Activated CD8-positive, alpha-beta memory T cell treated with anti-CD3 and anti-CD28 coated beads, Interleukin-2, amount 10 ng/mL, durations not matched to agents 7 days and 5 days (primary cell): ENCODE measurements at regions of chr19 and their contacts with region 1.

Region 1: GRCh38 chr19:1064661-1065605 is 2.0 kb upstream of the ARHGAP45 start:
- DNase-seq: peak; percentile 78
- ATAC-seq: peak; percentile 40
- H3K4me3 Mint-ChIP-seq: no peak overlapping the region
- H3K27ac Mint-ChIP-seq: peak overlapping the region; percentile 57
- H3K4me1 Mint-ChIP-seq: peaks cover 26% of the 10 kb centered on the region
- H3K27me3 Mint-ChIP-seq: no peaks in the 10 kb centered on the region

Region 2: DNA sequence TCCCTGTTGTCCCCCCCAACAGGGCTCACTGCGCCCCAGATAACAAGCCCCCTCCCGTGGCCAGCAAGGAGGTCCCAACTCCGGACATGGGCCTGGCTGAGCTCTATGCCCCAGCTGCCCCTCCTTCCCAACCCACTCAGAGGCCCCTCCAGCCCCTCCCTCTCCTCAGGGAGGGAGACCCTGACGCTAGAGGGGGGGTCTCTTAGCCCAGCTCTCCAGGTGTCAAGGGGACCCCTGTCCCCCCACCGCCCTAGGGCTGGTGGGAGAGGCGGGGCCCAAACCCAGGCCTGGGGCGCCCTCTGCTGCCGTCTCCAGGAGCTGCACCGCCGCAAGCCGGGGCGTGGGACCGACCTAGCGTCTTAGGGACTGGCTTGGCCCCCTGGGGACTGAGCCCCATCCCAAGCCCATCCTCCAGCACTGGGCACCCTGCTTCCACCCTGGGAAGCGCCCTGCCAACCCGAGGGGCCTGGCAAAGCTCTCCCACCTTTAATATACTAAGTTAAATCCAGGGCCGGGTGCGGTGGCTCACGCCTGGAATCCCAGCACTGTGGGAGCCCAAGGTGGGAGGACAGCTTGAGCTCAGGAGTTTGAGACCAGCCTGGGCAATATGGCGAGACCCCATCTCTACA is 63.3 kb before region 1 on chr19:
- CTCF ChIA-PET with region 1: no interaction called
- DNase-seq: peak; percentile 74
- ATAC-seq: peak; percentile 77
- H3K4me3 Mint-ChIP-seq: no peak overlapping the region
- H3K27ac Mint-ChIP-seq: no peak overlapping the region
- H3K4me1 Mint-ChIP-seq: peaks cover 3% of the 10 kb centered on the region
- H3K27me3 Mint-ChIP-seq: peaks cover 34% of the 10 kb centered on the region

Region 3: DNA sequence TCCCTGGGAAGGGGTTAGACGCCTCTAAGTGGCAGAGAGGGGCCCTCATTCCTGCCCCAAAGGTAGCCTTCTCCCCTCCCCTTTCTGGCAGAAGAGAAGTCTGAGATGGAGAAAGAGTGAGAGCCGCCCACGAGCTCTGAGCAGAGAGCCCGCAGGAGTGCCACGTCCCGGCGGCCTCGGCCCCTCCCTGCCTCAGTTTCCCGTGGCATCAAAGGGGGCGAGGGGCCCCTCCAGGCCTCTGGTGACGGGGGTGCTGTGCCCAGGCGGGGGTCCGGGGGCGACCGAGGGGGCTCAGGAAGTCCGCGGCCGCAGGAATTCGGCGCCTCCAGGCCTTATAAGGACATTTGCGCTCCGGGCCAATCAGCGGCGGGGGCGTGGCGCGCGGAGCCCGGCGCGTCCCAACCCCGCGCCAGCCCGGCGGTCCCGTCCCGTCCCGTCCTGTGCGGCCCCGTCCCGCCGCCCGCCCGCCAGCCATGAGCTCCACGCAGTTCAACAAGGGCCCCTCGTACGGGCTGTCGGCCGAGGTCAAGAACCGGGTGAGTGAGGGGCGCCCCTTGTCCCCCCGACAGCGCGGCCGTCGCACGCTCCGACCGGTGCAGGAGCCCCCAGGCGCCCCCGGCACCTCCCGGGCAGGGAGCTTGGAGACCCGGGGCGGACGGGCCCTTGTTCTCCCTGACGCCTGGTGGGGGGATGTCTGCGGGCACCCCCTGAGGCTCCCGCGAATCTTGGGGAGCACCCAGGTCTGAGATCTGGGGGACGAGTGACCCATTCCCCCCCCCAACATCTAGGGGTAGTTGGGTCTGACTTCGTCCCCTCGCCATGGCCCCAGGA is 38.5 kb before region 1 on chr19 and contains the start of gene CNN2:
- CTCF ChIA-PET with region 1: interaction called, 43 read pairs
- DNase-seq: peak; percentile 79
- ATAC-seq: peak; percentile 69
- H3K4me3 Mint-ChIP-seq: peak within 1 kb of the TSS; percentile 91
- H3K27ac Mint-ChIP-seq: peak within 1 kb of the TSS; percentile 90
- H3K4me1 Mint-ChIP-seq: peaks cover 29% of the 10 kb centered on the region
- H3K27me3 Mint-ChIP-seq: no peaks in the 10 kb centered on the region
- total RNA-seq, gene CNN2: 295 to 296 TPM

Region 4: GRCh38 chr19:1039646-1040475 is 25.1 kb before region 1 on chr19 and contains the start of gene ABCA7:
- CTCF ChIA-PET with region 1: interaction called, 56 read pairs
- DNase-seq: peak; percentile 100
- ATAC-seq: peak; percentile 95
- H3K4me3 Mint-ChIP-seq: peak within 1 kb of the TSS; percentile 93
- H3K27ac Mint-ChIP-seq: peak within 1 kb of the TSS; percentile 83
- H3K4me1 Mint-ChIP-seq: peaks cover 53% of the 10 kb centered on the region
- H3K27me3 Mint-ChIP-seq: no peaks in the 10 kb centered on the region
- total RNA-seq, gene ABCA7: 62.7 to 72.9 TPM

Region 5: GRCh38 chr19:1087813-1088415 is 23.0 kb after region 1 on chr19:
- CTCF ChIA-PET with region 1: interaction called, 108 read pairs
- DNase-seq: no peak
- ATAC-seq: peak; percentile 23
- H3K4me3 Mint-ChIP-seq: peak overlapping the region; percentile 21
- H3K27ac Mint-ChIP-seq: peak overlapping the region; percentile 84
- H3K4me1 Mint-ChIP-seq: peaks cover 47% of the 10 kb centered on the region
- H3K27me3 Mint-ChIP-seq: no peaks in the 10 kb centered on the region

Region 6: DNA sequence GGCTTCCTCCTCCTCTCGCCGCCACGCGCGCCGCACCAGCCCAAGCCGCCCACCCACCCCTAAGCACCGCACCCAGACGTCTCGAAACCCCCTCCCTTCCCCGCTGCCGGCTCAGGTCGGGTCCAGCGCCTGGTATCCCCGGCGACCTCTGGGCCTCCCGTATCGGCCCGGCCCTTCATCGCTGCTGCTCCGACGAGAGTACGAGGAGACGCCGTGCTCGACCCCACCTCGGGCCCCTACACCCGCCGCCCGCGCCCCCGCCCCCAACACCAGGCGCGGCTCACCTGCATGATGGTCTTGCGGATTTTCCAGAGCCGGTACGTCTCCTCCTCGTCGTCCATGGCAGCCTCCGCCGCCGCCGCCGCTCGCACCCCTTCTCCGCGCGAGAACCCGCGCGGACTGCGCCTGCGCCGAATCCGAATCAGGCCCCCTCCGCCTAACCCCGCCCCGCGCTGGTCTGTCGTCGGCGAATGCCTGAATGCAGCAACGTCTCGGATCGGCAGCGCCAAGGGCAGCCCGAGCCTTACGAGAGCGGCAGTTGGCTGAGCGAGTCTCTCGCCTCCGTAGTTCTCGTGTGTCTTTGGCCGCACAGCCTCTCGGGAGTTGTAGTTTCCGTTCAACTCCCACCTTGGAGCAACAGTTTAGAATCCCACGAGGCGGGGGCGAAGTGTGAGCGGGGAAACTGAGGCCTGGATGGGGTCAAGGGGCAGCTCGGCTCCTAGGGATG is 30.2 kb after region 1 on chr19 and contains the start of gene POLR2E:
- CTCF ChIA-PET with region 1: interaction called, 64 read pairs
- DNase-seq: peak; percentile 99
- ATAC-seq: peak; percentile 96
- H3K4me3 Mint-ChIP-seq: peak within 1 kb of the TSS; percentile 86
- H3K27ac Mint-ChIP-seq: peak within 1 kb of the TSS; percentile 91
- H3K4me1 Mint-ChIP-seq: peaks cover 62% of the 10 kb centered on the region
- H3K27me3 Mint-ChIP-seq: no peaks in the 10 kb centered on the region
- total RNA-seq, gene POLR2E: 173 to 206 TPM